Activated T-helper 1 cell treated with anti-CD3 and anti-CD28 coated beads, Interleukin-12 subunit alpha, Interleukin-12 subunit beta, Interleukin-2, Interleukin-4 antibody, amounts not matched to agents 30 ng/mL and 10 ng/mL and 1 ng/mL, durations not matched to agents 14 hours and 24 hours and 36 hours (primary cell): ENCODE measurements at regions of chr2 and their contacts with region 1.

Region 1: GRCh38 chr2:28566521-28567041 is 70.7 kb downstream of the PLB1 start:
- DNase-seq: peak; percentile 86
- H3K4me3 Mint-ChIP-seq: peak overlapping the region; percentile 86
- H3K27ac Mint-ChIP-seq: peak overlapping the region; percentile 71
- H3K4me1 Mint-ChIP-seq: peaks cover 24% of the 10 kb centered on the region
- H3K27me3 Mint-ChIP-seq: peaks cover 4% of the 10 kb centered on the region

Region 2: DNA sequence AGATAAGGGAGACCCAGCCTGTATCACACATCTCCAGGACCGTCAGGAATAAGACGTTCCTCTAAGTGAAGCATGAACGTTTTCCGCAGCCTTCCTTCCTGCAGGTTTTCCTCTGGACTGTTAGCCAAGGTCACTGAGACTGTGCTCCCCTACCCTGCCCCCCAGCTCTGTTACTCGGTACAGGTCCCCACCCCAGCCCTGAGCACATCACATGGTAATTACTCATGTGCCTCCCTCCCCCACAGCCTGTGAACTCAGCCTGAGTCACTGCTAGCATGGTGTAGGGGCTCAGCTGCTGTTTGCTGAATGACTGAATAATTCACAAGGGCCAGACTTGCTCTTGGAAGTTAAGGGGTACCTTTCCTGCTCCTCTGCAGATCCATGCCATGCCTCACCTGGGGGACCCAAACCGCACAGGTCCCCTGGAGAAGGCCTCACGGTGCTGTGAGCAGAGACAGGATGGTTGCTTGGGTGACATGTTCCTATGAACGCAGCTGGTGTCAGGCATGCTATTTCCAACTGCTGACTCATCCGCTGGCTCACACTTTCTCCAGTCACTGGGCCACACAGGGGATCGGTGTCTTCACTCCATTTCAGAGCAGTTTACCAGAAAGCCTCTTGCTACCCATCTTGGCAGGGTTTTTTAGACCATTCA is 17.4 kb after region 1 on chr2:
- intact Hi-C with region 1: loop called (anchors 1 kb)
- DNase-seq: peak; percentile 44
- H3K4me3 Mint-ChIP-seq: peak overlapping the region; percentile 29
- H3K27ac Mint-ChIP-seq: peak overlapping the region; percentile 74
- H3K4me1 Mint-ChIP-seq: peaks cover 44% of the 10 kb centered on the region
- H3K27me3 Mint-ChIP-seq: no peaks in the 10 kb centered on the region

Region 3: DNA sequence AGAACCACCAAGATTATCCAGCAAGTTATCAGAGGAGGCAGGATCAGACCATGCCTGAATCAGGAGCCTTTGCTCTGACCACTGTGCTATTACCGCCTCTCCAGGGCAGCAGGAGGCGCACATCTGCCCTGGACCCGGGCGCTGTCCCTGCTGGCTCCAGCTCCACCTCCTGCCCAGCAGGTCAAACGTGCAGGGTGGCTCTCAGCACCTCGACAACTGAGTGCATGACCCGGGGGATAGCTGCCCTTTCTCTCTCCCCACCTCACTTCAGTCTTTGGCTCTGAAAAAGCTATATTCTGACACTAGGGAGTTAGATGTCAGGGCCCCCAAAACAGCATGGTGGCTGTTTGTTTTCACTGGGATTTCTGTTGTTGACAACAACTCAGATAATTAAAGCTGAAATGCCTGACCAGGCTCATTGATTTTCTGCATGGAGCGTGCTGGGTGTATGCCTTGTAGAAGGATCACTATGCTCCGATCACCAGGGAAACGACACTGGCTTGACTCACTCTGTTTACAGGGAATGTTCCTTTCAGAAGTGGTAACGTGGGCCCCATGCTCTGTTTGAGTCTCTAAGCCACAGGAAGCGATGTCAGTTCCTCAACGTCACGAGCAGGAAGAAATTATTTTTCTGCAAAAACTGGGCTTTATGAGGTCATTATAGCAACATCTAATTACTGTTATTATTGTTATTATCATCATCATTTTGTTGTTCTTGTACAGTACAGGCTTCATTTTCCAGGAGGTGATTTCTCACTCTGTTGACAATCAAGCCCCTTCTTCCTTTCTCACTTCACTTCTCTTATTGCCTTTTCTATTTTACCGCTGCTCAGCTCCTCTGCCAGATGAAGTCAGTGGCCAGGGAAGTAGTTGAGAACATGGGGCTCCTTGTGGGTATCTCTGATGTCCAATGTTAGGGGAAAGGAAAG is 54.9 kb after region 1 on chr2:
- intact Hi-C with region 1: loop called (anchors 2 kb)
- DNase-seq: peak; percentile 77
- H3K4me3 Mint-ChIP-seq: peak overlapping the region; percentile 67
- H3K27ac Mint-ChIP-seq: peak overlapping the region; percentile 96
- H3K4me1 Mint-ChIP-seq: peaks cover 5% of the 10 kb centered on the region
- H3K27me3 Mint-ChIP-seq: no peaks in the 10 kb centered on the region

Region 4: DNA sequence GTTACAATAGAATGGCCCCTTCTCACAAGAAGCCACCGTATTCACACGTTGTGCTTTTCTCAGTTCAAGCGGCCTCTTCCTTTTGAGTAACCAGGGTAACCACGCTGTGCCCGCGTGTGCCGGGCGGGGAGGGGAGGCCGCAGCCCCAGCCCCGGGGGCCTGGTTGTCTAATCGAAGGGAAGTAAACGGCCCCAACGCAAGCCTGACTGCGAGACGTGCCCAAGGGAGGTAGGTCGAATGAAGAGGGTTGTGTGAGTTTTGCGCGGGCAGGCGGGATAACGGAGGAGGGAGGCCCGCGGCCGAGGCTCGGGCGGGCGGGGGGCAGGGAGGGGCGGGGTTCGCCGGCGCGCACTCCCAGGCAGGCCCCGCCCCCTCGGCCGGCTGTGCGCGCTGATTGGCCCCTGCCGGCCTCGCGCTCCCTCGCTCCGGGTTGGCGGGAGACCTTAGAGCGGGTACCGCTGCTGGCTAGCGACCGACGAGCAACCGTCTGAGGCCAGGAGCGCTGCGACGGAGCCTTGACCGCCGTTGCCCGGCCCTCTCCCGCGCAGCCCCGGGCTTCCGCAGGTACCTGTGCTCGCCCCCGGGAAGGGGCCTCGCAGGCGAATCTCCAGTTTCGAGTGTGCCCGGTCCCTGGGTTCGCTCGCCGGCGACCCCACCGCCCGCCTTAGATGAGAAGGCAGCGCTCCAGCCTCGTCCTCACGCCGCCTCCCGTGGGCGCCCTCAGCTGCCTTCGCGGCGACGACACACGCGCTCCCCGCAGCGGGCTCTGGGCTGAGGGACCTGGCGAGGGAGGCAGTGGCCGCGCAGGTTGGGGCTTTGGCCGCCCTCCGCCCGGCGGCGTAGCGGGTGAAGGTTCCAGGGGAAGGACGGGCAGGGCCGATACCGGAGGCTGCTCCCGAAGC is 244.1 kb after region 1 on chr2 and contains the start of gene SPDYA:
- intact Hi-C with region 1: loop called (anchors 1 kb)
- DNase-seq: peak; percentile 79
- H3K4me3 Mint-ChIP-seq: peak within 1 kb of the TSS; percentile 80
- H3K27ac Mint-ChIP-seq: peak within 1 kb of the TSS; percentile 40
- H3K4me1 Mint-ChIP-seq: peaks cover 12% of the 10 kb centered on the region
- H3K27me3 Mint-ChIP-seq: peaks cover 4% of the 10 kb centered on the region
- total RNA-seq, gene SPDYA: 1.1 and 1.7 TPM in 2 replicates

Region 5: GRCh38 chr2:28894470-28895177 is 328.0 kb after region 1 on chr2 and contains the start of gene WDR43:
- intact Hi-C with region 1: loop called (anchors 1 kb)
- DNase-seq: peak; percentile 99
- H3K4me3 Mint-ChIP-seq: peak within 1 kb of the TSS; percentile 100
- H3K27ac Mint-ChIP-seq: peak within 1 kb of the TSS; percentile 96
- H3K4me1 Mint-ChIP-seq: peaks cover 40% of the 10 kb centered on the region
- H3K27me3 Mint-ChIP-seq: no peaks in the 10 kb centered on the region
- total RNA-seq, gene WDR43: 188 and 190 TPM in 2 replicates

Region 6: DNA sequence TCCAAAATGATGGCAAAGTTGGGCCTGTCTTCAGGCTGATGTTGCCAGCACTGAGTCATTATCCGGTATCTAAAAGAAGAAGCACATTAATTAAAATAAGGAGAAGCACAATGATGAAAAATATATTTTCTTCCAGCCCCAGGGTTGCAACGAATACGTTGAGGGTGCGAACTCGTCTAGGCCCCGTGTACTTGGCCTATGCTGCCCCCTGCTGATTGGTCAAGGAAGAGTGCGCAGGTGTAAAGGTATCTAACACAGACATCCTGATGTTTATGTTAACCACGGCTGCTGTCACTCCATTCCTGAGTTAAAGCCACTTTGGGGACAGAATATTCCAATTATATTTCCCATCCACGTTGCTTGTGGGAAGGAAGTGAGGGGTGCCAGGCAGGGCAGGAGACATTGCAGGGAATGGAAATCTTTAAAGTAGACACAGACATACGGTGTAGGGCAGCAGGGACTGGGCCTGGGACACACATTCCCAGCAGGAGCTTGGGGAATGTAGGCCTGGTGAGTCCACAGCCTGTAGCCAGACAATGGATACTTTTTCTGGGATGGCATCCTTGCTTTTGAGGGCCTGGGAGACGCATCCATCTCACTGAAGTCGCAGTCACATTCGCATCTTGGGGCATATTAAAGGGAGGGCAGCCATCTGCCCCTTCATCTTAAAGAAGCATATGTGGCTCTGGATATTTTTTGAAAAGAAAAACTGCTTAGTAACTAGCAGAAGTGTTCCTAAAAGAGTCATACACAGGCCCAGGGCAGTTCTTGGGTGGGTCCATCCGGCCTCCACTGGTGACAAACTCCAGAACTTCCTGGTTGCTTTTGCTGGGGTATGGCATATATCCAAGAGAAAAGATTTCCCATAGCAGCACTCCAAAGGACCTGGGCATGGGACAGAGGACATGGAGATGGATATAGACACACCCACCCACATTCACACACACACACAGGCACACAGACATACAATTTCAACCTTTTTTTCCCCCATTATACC is 630.5 kb after region 1 on chr2:
- intact Hi-C with region 1: loop called (anchors 2 kb)
- DNase-seq: peak; percentile 67
- H3K4me3 Mint-ChIP-seq: no peak overlapping the region
- H3K27ac Mint-ChIP-seq: no peak overlapping the region
- H3K4me1 Mint-ChIP-seq: no peaks in the 10 kb centered on the region
- H3K27me3 Mint-ChIP-seq: peaks cover 2% of the 10 kb centered on the region